Activated CD4-positive, alpha-beta T cell treated with anti-CD3 and anti-CD28 coated beads for 36 hours (primary cell): ENCODE measurements at regions of chr1 and their contacts with region 1.

Region 1: GRCh38 chr1:40315239-40315794 is 1.8 kb downstream of the COL9A2 start:
- DNase-seq: peak; percentile 92
- ATAC-seq: peak; percentile 74
- H3K4me3 Mint-ChIP-seq: peak overlapping the region; percentile 72
- H3K27ac Mint-ChIP-seq: peak overlapping the region; percentile 77
- H3K4me1 Mint-ChIP-seq: peaks cover 42% of the 10 kb centered on the region
- H3K27me3 Mint-ChIP-seq: peaks cover 14% of the 10 kb centered on the region

Region 2: GRCh38 chr1:40143891-40144575 is 171.3 kb before region 1 on chr1:
- CTCF ChIA-PET with region 1: interaction called, 52 read pairs
- POLR2A ChIA-PET with region 1: no interaction called
- intact Hi-C with region 1: loop called in 1 of 2 experiments (anchors 1 kb)
- DNase-seq: peak; percentile 67
- ATAC-seq: peak; percentile 86
- H3K4me3 Mint-ChIP-seq: no peak overlapping the region
- H3K27ac Mint-ChIP-seq: no peak overlapping the region
- H3K4me1 Mint-ChIP-seq: peaks cover 10% of the 10 kb centered on the region
- H3K27me3 Mint-ChIP-seq: peaks cover 22% of the 10 kb centered on the region

Region 3: DNA sequence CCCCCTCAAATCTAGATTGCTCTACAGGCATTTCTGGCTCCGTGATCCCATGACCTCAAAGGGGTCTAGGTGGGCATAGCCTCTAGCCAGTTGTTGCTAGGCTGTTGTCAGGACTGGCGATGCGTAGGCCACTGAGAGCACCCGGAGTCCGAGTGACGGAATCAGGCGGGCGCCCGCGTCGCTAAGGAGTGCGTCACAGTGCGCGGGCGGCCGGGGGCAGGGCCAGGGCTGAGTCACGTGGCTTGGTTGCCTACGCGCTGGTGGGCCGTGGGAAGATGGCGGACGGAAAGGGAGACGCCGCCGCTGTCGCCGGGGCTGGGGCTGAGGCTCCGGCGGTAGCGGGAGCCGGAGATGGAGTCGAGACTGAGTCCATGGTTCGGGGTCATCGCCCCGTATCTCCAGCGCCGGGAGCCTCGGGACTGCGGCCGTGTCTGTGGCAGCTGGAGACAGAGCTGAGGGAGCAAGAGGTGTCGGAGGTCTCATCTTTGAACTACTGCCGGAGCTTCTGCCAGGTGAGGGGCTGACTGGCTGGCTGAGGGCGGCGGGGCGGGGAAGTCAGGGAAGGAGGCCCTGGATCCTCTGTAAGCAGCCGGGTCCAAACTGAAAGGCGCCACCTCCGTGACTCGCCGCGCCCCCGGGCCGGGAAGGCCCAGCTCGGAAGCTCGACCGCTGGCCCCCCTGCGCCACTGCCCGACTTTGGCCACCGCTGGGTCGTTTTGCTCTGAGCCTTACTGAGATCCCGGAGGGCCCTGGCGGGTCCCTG is 154.0 kb before region 1 on chr1 and contains the start of gene RLF:
- CTCF ChIA-PET with region 1: interaction called, 4 read pairs
- POLR2A ChIA-PET with region 1: no interaction called
- intact Hi-C with region 1: loop called in 1 of 2 experiments (anchors 1 kb)
- DNase-seq: peak; percentile 98
- ATAC-seq: peak; percentile 81
- H3K4me3 Mint-ChIP-seq: no peak within 1 kb of the TSS
- H3K27ac Mint-ChIP-seq: no peak within 1 kb of the TSS
- H3K4me1 Mint-ChIP-seq: peaks cover 4% of the 10 kb centered on the region
- H3K27me3 Mint-ChIP-seq: no peaks in the 10 kb centered on the region
- total RNA-seq, gene RLF: 20.1 to 20.9 TPM

Region 4: DNA sequence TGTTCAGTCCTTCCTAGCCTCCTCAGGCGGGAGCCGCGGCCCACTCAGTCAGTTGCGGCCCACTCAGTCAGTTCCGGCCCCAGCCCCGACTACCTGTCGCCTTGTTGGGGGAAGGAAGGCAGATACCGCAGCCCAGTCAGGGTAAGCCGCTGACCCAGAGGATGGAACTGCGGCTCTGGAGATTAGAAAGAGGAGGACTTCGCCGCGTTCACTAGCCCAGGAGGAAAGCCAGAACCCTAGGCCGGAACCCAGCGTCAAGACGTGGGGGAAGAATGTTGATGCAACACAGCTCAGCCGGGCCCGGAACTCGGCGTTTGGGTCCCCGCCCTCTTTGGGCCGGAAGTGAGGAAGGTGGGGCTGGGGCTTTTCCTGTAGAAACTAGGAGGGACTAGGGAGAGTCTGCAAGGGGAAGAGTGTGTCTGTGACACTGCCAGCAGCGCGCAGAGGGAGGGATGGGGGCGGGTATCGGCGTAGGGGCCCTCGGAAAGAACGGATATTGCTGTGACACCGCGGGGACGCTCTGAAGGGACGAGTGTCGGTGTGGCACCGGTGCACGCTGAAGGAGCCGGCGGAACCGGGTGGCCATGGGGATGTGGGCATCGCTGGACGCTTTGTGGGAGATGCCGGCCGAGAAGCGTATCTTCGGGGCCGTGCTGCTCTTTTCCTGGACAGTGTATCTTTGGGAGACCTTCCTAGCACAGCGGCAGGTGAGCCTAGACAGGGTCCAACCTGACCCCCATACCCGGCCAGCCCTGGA is 57.5 kb before region 1 on chr1 and contains the start of gene ZMPSTE24:
- CTCF ChIA-PET with region 1: interaction called, 4 read pairs
- POLR2A ChIA-PET with region 1: no interaction called
- intact Hi-C with region 1: loop called in 1 of 2 experiments (anchors 2 kb)
- DNase-seq: peak; percentile 98
- ATAC-seq: peak; percentile 97
- H3K4me3 Mint-ChIP-seq: peak within 1 kb of the TSS; percentile 99
- H3K27ac Mint-ChIP-seq: peak within 1 kb of the TSS; percentile 100
- H3K4me1 Mint-ChIP-seq: peaks cover 47% of the 10 kb centered on the region
- H3K27me3 Mint-ChIP-seq: no peaks in the 10 kb centered on the region
- total RNA-seq, gene ZMPSTE24: 20.7 to 23.0 TPM

Region 5: GRCh38 chr1:40270152-40270834 is 45.0 kb before region 1 on chr1:
- CTCF ChIA-PET with region 1: interaction called, 3 read pairs
- POLR2A ChIA-PET with region 1: no interaction called
- intact Hi-C with region 1: loop called in 1 of 2 experiments (anchors 1 kb)
- DNase-seq: peak; percentile 26
- ATAC-seq: peak; percentile 89
- H3K4me3 Mint-ChIP-seq: no peak overlapping the region
- H3K27ac Mint-ChIP-seq: peak overlapping the region; percentile 85
- H3K4me1 Mint-ChIP-seq: peaks cover 34% of the 10 kb centered on the region
- H3K27me3 Mint-ChIP-seq: no peaks in the 10 kb centered on the region

Region 6: GRCh38 chr1:40338745-40339424 is 23.6 kb after region 1 on chr1:
- CTCF ChIA-PET with region 1: interaction called, 61 read pairs
- POLR2A ChIA-PET with region 1: interaction called, 4 read pairs
- intact Hi-C with region 1: loop called in 1 of 2 experiments (anchors 1 kb)
- DNase-seq: peak; percentile 94
- ATAC-seq: peak; percentile 85
- H3K4me3 Mint-ChIP-seq: peak overlapping the region; percentile 14
- H3K27ac Mint-ChIP-seq: peak overlapping the region; percentile 69
- H3K4me1 Mint-ChIP-seq: peaks cover 42% of the 10 kb centered on the region
- H3K27me3 Mint-ChIP-seq: no peaks in the 10 kb centered on the region